Posterior vena cava (tissue), 2 donors: ENCODE measurements at regions of chr15 and their contacts with region 1.

Region 1: DNA sequence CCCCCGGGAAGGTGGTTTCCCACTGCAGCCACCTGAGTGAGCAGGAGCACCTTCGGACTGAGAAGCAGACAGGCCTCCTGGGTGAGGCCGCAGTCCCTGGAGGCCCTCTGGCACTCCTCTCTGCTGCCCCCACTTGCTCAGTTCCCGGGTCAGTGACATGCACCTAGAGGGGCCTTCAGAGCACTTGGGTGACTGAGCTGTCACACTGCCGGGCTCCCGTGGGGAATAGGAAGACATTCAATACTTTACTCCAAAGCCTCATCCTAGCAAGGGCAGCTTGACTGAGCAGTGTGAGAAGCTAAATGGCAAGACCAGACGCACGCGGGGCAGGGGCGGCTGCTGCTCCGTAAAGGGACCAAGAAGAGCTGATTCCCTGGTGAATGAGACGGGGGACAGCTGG is 62.6 kb downstream of the PCSK6 start:
- DNase-seq: no peak

Region 2: GRCh38 chr15:99967841-99968371 is 1459.0 kb before region 1 on chr15:
- intact Hi-C with region 1: loop called in 1 of 2 experiments (anchors 5 kb)
- DNase-seq: peak; percentile 57

Region 3: DNA sequence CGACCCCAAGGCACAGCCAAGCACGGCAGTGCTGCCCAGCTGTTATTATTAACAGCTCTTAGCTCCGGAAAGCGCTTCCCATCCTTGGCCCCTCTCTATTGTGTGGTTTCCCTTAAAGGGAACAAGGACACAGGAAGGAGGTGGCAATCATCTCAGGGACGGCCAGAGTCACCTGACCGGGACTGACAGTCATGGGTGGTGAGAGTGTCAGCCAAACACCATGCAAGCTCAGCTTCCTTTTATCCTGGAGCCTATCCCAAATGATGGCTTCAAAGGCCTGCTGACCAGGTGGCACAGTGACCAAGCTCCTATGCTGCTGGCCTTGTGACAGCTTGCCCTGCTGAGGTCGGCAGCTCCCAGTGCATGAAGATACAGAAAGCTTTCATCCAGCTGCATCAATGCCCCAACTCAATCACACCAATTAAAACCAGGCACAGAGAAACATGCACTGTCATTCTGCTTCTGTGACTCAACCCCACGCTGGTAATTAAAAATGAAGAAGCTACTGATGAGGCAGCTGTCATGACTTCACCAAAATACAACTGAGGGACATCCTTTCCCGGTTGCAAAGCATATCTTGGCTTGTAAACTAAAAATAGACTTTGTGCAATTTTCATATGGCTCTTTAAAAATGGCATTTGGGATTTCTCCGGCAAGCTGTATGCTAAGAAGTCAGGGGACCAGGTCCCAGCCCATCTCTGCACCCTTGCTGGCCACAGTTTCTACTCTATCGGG is 28.6 kb after region 1 on chr15:
- intact Hi-C with region 1: no loop called
- DNase-seq: peak; percentile 58